ENCODE measurements at regions of chr17 and their contacts with region 1.

Region 1: DNA sequence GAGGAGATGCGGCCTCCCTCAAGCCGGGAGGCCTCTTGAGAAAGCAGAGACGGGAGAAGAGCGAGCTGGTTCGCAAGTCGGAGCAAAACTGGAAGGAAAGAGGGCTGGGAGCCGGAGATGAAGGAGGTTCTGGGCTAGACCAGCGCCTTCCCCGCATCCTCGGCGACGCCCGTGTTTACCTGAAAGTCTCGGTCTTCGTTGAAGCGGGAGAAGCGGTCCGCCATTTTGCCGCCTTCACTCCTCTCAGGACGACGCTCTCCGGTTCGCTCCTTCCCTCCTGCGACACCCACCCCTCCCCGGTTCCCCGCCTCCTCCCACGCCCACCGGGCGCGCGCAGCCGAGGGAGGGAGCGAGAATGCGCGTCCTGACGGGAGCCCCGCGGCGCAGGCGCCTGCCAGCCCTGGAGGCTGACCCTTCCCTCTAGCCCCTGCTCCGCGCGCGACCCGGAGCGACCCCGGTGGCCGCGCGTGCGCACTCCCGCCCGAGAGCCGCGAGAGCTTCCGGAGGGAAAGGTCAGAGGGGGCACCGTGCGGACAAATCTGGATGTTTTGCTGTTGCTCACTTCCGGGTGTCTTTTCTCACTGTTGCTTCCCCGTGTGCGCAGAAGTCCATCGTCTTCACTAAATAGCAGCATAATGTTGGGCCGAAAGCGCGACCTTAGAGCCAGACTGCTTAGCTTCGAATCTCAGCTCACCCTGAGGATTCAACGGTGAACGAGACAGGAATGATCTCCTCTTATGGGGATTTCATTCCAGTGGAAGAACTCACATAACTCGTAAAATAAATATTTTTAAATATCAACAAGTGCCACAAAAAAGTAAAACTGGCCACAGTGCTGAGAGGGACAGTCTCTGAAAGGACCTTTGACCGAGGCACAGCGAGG is at the start of gene GPATCH8:
- DNase-seq: peak; percentile 88 to 97
- H3K4me3 ChIP-seq: peak within 1 kb of the TSS; percentile 82 to 97 (median 86)
- H3K27ac ChIP-seq: peak within 1 kb of the TSS; percentile 96
- H3K4me1 ChIP-seq: peaks cover 2 to 3% (median 2%) of the 10 kb centered on the region in 4 experiments; a peak in 4 of 7 replicates
- H3K27me3 ChIP-seq: 0 out of 7 replicates have a peak, but pooled peaks cover 0 to 2% (median 0%) of the 10 kb centered on the region in 4 experiments
- CTCF ChIP-seq: no peak
- EP300 ChIP-seq: no peak
- POLR2A ChIP-seq: peak; percentile 78 to 97
- RAD21 ChIP-seq: no peak
- total RNA-seq, gene GPATCH8: 51.5 and 58.1 TPM in 2 replicates

Region 2: GRCh38 chr17:44518032-44518431 is 14.6 kb after region 1 on chr17:
- CTCF ChIA-PET with region 1: interaction called, 5 read pairs
- POLR2A ChIA-PET with region 1: interaction called, 16 read pairs
- DNase-seq: no peak
- H3K4me3 ChIP-seq: no peak overlapping the region
- H3K27ac ChIP-seq: no peak overlapping the region
- H3K4me1 ChIP-seq: no peaks in the 10 kb centered on the region
- H3K27me3 ChIP-seq: no peaks in the 10 kb centered on the region
- CTCF ChIP-seq: no peak
- EP300 ChIP-seq: no peak
- POLR2A ChIP-seq: no peak
- RAD21 ChIP-seq: no peak

Region 3: GRCh38 chr17:44529864-44530263 is 26.5 kb after region 1 on chr17:
- CTCF ChIA-PET with region 1: no interaction called
- POLR2A ChIA-PET with region 1: no interaction called
- DNase-seq: no peak
- H3K4me3 ChIP-seq: no peak overlapping the region
- H3K27ac ChIP-seq: no peak overlapping the region
- H3K4me1 ChIP-seq: peaks cover 0 to 7% (median 3%) of the 10 kb centered on the region in 4 experiments; a peak in 4 of 7 replicates
- H3K27me3 ChIP-seq: peaks cover 0 to 1% (median 0%) of the 10 kb centered on the region in 4 experiments; a peak in 1 of 7 replicates
- CTCF ChIP-seq: no peak
- EP300 ChIP-seq: no peak
- POLR2A ChIP-seq: peak in 1 of 2 experiments; percentile 54; a peak in 2 of 3 replicates
- RAD21 ChIP-seq: no peak

Region 4: GRCh38 chr17:44549686-44550085 is 46.3 kb after region 1 on chr17:
- CTCF ChIA-PET with region 1: no interaction called
- POLR2A ChIA-PET with region 1: no interaction called
- DNase-seq: no peak
- H3K4me3 ChIP-seq: no peak overlapping the region; a peak in 1 of 8 replicates
- H3K27ac ChIP-seq: no peak overlapping the region
- H3K4me1 ChIP-seq: peaks cover 16 to 33% (median 28%) of the 10 kb centered on the region in 4 experiments
- H3K27me3 ChIP-seq: peaks cover 0 to 26% (median 8%) of the 10 kb centered on the region in 4 experiments; a peak in 5 of 7 replicates
- CTCF ChIP-seq: no peak
- EP300 ChIP-seq: no peak
- POLR2A ChIP-seq: no peak
- RAD21 ChIP-seq: no peak